SK-N-SH (cell line): ENCODE measurements at regions of chr17 and their contacts with region 1.

Region 1: DNA sequence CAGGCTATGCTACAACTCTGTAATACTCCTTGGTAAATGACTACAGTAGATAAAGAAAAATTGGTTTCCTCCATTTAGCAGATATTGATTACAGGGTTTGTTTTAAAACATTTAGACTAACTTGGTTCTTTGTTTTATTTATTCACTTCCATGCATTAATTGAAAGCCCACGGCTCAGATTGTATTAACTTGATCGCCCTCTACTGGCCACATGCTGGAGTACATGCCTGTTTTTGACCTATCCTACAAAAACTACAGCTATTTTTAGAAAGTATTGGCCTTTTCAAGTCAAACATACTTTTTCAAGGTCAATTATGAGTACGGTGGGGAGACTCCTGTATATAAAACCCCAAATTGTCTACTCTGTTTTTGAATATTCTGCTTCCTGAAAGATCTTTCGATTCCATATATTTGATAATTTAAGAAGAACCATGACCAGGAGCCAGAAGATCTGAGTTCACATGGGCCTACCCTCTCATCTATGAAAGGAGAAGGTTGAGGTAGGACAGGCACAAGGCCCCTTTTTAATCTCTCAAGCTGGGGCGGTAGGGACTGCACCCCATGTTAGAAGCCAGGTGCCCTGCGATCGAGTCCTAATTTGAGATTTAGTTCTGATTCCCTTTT is 51.8 kb downstream of the CA10 start:
- DNase-seq: peak; percentile 69
- H3K4me3 ChIP-seq: no peak overlapping the region
- H3K27ac ChIP-seq: no peak overlapping the region
- H3K4me1 ChIP-seq: no peaks in the 10 kb centered on the region
- H3K27me3 ChIP-seq: no peaks in the 10 kb centered on the region
- CTCF ChIP-seq: peak; percentile 100
- EP300 ChIP-seq: no peak
- RAD21 ChIP-seq: peak; percentile 93

Region 2: GRCh38 chr17:51748749-51749539 is 357.8 kb before region 1 on chr17:
- CTCF ChIA-PET with region 1: interaction called, 26 read pairs
- POLR2A ChIA-PET with region 1: no interaction called
- DNase-seq: no peak
- H3K4me3 ChIP-seq: no peak overlapping the region
- H3K27ac ChIP-seq: no peak overlapping the region
- H3K4me1 ChIP-seq: peaks cover 0 to 6% of the 10 kb centered on the region in 2 experiments; a peak in 2 of 4 replicates
- H3K27me3 ChIP-seq: no peaks in the 10 kb centered on the region
- CTCF ChIP-seq: no peak
- EP300 ChIP-seq: no peak
- RAD21 ChIP-seq: no peak

Region 3: DNA sequence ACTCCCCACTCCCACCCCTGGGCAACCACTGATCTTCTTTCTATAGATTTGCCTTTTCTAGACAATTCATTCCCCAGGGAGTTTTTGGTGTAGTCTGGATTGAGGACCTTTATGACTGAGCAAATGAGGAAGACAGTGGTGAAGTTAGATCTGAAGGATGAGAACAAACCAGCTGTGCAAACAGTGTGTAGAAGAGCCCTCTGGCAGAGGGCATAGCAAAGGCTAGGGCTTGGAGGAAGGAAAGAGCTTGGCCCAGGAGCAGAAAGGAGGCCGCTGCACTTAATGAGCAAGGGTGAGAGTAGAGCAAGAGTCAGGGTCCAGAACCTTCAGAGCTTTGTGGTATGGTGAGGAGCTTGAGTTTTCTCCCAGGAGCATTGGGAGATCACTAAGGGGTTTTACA is 301.0 kb before region 1 on chr17:
- CTCF ChIA-PET with region 1: interaction called, 12 read pairs
- POLR2A ChIA-PET with region 1: no interaction called
- DNase-seq: no peak
- H3K4me3 ChIP-seq: no peak overlapping the region
- H3K27ac ChIP-seq: no peak overlapping the region
- H3K4me1 ChIP-seq: peaks cover 0 to 5% of the 10 kb centered on the region in 2 experiments; a peak in 2 of 4 replicates
- H3K27me3 ChIP-seq: no peaks in the 10 kb centered on the region
- CTCF ChIP-seq: no peak
- EP300 ChIP-seq: no peak
- RAD21 ChIP-seq: no peak

Region 4: GRCh38 chr17:51860954-51861561 is 245.7 kb before region 1 on chr17:
- CTCF ChIA-PET with region 1: interaction called, 77 read pairs
- POLR2A ChIA-PET with region 1: no interaction called
- DNase-seq: peak; percentile 50
- H3K4me3 ChIP-seq: no peak overlapping the region; a peak in 1 of 4 replicates
- H3K27ac ChIP-seq: no peak overlapping the region
- H3K4me1 ChIP-seq: peaks cover 0 to 11% of the 10 kb centered on the region in 2 experiments; a peak in 2 of 4 replicates
- H3K27me3 ChIP-seq: no peaks in the 10 kb centered on the region
- CTCF ChIP-seq: peak; percentile 74
- EP300 ChIP-seq: no peak
- RAD21 ChIP-seq: peak; percentile 82

Region 5: DNA sequence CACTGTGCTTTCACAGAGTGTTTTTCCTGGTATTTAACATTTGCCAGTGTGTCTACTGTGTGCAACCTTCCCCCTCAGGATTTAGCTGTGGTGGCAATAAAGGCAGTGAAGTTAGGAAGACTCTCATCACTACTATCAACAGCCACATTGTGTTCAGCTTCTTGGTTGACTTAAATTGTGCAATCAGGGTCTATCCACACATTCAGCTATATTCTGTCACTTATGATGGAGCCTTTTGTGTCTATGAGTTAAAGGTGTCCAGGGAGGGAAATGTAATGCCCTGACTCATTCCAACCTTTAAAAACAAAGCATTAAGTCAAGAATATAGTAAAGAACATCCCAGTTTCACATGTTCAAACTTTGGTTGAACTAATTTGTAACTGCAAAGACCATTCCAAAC is 124.6 kb before region 1 on chr17:
- CTCF ChIA-PET with region 1: interaction called, 13 read pairs
- POLR2A ChIA-PET with region 1: no interaction called
- DNase-seq: no peak
- H3K4me3 ChIP-seq: no peak overlapping the region
- H3K27ac ChIP-seq: no peak overlapping the region
- H3K4me1 ChIP-seq: no peaks in the 10 kb centered on the region
- H3K27me3 ChIP-seq: no peaks in the 10 kb centered on the region
- CTCF ChIP-seq: no peak
- EP300 ChIP-seq: no peak
- RAD21 ChIP-seq: no peak

Region 6: DNA sequence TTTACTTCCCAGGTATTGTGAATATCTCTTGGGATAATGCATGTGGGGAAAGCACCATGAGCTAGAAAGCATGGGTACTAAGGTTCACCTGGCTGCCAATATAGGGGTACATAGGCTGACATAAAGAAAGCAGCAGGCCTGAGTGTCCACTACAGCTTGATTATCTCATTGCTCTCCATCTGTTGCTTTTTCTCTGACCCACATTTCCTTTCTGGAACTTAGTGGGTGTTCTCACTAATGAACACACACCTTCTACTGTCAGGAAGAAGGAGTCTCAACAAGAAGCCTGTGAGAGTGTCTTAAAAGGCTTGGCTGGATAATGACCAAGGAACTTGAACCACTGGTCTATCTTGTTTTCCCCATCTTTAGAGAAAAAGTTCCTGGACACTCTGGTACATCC is 10.7 kb before region 1 on chr17:
- CTCF ChIA-PET with region 1: interaction called, 17 read pairs
- POLR2A ChIA-PET with region 1: no interaction called
- DNase-seq: no peak
- H3K4me3 ChIP-seq: no peak overlapping the region
- H3K27ac ChIP-seq: no peak overlapping the region
- H3K4me1 ChIP-seq: no peaks in the 10 kb centered on the region
- H3K27me3 ChIP-seq: no peaks in the 10 kb centered on the region
- CTCF ChIP-seq: no peak
- EP300 ChIP-seq: no peak
- RAD21 ChIP-seq: no peak